ENCODE measurements at regions of chr9 and their contacts with region 1.

Region 1: GRCh38 chr9:27548055-27548741 is 18.6 kb upstream of the MOB3B start:
- DNase-seq: peak; percentile 35
- H3K4me3 ChIP-seq: no peak overlapping the region
- H3K27ac ChIP-seq: no peak overlapping the region
- H3K4me1 ChIP-seq: no peaks in the 10 kb centered on the region
- H3K27me3 ChIP-seq: no peaks in the 10 kb centered on the region
- CTCF ChIP-seq: peak; percentile 46 to 49

Region 2: DNA sequence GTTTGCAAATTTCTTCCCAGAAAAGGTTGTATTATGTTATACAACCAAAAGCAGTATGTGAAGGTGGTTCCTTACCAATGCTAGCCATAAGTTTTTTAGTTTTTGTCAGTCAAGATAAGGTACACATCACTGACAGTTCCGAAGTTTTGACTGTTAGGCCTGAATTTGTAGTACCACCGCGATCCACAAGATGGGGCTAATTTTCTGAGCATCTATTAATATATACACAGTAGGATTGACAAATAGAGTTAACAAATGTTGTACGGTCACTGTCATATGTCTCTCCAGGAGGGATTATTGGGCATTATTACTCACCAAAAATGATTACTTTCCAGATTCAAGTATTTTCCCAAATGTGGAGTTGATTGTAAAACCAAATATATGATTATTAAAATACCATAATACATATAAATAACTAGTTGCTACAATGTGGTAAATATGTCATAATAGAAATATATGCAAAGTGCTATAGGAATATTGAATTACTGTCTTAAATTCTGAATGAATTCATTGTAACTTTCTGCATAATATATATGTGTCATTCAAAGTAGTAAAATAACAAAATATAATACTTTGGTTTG is 514.3 kb before region 1 on chr9:
- CTCF ChIA-PET with region 1: no interaction called
- dilution Hi-C with region 1: no loop called
- in situ Hi-C with region 1: no loop called
- intact Hi-C with region 1: loop called (anchors 5 kb)
- DNase-seq: peak; percentile 41
- H3K4me3 ChIP-seq: no peak overlapping the region
- H3K27ac ChIP-seq: no peak overlapping the region
- H3K4me1 ChIP-seq: peaks cover 8% of the 10 kb centered on the region
- H3K27me3 ChIP-seq: no peaks in the 10 kb centered on the region
- CTCF ChIP-seq: peak; percentile 81 to 88

Region 3: GRCh38 chr9:27247756-27248155 is 300.4 kb before region 1 on chr9:
- CTCF ChIA-PET with region 1: no interaction called
- dilution Hi-C with region 1: no loop called
- in situ Hi-C with region 1: no loop called
- intact Hi-C with region 1: loop called (anchors 1 kb)
- DNase-seq: peak; percentile 56
- H3K4me3 ChIP-seq: no peak overlapping the region
- H3K27ac ChIP-seq: no peak overlapping the region
- H3K4me1 ChIP-seq: no peaks in the 10 kb centered on the region
- H3K27me3 ChIP-seq: no peaks in the 10 kb centered on the region
- CTCF ChIP-seq: peak; percentile 66 to 79

Region 4: GRCh38 chr9:27599102-27599869 is 51.1 kb after region 1 on chr9:
- CTCF ChIA-PET with region 1: no interaction called
- dilution Hi-C with region 1: no loop called
- in situ Hi-C with region 1: loop called in 1 of 2 experiments (anchors 10 kb)
- intact Hi-C with region 1: no loop called
- DNase-seq: peak; percentile 31
- H3K4me3 ChIP-seq: no peak overlapping the region
- H3K27ac ChIP-seq: no peak overlapping the region
- H3K4me1 ChIP-seq: no peaks in the 10 kb centered on the region
- H3K27me3 ChIP-seq: no peaks in the 10 kb centered on the region
- CTCF ChIP-seq: no peak

Region 5: DNA sequence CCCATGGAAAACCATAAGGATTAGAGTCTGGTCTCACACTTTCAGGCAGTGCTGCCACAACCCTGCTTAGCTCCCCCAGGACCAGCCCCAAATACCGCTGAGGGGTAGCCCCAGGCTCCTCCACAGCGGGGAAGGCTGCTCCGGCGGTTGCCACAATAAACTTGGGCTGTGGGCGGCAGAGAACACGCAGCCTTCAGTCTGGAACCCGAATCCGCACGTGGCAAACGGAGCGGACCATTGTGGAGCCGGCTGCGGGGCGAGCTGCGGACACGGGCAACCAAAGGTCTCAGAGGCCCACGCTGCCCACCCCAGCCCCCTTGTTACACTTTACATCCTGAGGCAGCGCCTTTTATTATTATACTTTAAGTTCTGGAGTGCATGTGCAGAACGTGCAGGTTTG is 62.4 kb after region 1 on chr9:
- CTCF ChIA-PET with region 1: no interaction called
- dilution Hi-C with region 1: no loop called
- in situ Hi-C with region 1: no loop called
- intact Hi-C with region 1: no loop called
- DNase-seq: no peak
- H3K4me3 ChIP-seq: no peak overlapping the region
- H3K27ac ChIP-seq: no peak overlapping the region
- H3K4me1 ChIP-seq: no peaks in the 10 kb centered on the region
- H3K27me3 ChIP-seq: no peaks in the 10 kb centered on the region
- CTCF ChIP-seq: no peak

Measured in mammary epithelial cell (primary cell).